Dendritic cell treated with granulocyte-macrophage colony-stimulating factor and Interleukin-4, amounts not matched to agents 40 ng/mL and 50 ng/mL, for 4 days (primary cell): ENCODE measurements at regions of chr10 and their contacts with region 1.

Region 1: GRCh38 chr10:123967396-123968243 is 76.0 kb upstream of the CPXM2 start:
- H3K4me3 Mint-ChIP-seq: no peak overlapping the region
- H3K27ac Mint-ChIP-seq: no peak overlapping the region
- H3K4me1 Mint-ChIP-seq: no peaks in the 10 kb centered on the region
- H3K27me3 Mint-ChIP-seq: peaks cover 67% of the 10 kb centered on the region

Region 2: DNA sequence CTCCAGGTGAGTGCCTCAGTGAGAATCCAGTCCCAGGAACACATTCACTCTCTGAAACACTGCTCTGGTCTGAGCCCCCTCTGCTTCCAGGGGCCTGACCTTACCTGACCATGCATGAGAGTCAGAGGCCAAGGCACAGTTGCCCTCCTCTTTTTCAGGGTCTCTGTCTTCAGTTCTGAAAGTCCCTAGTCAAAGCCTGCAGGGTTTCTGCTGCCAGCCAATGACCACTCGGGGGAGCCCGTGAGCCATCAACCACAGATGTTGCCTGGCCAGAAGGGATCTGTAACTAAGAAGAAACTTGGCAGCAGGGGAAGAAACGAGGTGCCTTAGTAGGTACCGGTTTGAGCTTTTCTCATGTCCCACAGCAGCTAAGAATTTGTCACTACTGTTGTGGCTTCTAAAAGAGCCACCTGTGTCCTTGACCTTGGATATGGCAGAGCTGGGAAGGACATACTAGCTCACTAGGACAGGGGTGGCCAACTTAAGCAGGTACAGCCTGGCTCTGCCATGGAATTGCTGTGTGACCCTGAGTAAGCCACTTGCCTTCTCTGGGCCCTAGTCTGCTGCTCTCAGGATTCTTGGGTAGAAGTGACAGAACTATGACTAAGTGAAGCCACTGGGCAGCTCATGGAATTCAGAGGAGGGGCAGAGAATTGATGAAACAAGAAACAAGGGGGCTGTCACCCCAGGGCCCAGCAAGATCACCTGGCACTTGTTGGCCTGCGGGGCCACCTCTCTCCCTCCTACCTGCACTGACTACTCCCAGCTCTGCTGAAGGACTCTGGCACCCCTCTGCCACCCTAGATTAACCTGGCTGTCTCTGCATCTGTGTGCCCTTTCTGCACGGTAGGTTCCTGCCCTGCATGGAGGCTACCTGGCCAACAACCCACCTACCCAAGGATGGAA is 385.3 kb before region 1 on chr10:
- intact Hi-C with region 1: loop called (anchors 1 kb)
- H3K4me3 Mint-ChIP-seq: no peak overlapping the region
- H3K27ac Mint-ChIP-seq: no peak overlapping the region
- H3K4me1 Mint-ChIP-seq: no peaks in the 10 kb centered on the region
- H3K27me3 Mint-ChIP-seq: peaks cover 44% of the 10 kb centered on the region

Region 3: GRCh38 chr10:123942114-123942807 is 25.4 kb before region 1 on chr10:
- intact Hi-C with region 1: no loop called
- H3K4me3 Mint-ChIP-seq: no peak overlapping the region
- H3K27ac Mint-ChIP-seq: no peak overlapping the region
- H3K4me1 Mint-ChIP-seq: no peaks in the 10 kb centered on the region
- H3K27me3 Mint-ChIP-seq: peaks cover 4% of the 10 kb centered on the region